ENCODE measurements at regions of chr6 and their contacts with region 1.

Region 1: DNA sequence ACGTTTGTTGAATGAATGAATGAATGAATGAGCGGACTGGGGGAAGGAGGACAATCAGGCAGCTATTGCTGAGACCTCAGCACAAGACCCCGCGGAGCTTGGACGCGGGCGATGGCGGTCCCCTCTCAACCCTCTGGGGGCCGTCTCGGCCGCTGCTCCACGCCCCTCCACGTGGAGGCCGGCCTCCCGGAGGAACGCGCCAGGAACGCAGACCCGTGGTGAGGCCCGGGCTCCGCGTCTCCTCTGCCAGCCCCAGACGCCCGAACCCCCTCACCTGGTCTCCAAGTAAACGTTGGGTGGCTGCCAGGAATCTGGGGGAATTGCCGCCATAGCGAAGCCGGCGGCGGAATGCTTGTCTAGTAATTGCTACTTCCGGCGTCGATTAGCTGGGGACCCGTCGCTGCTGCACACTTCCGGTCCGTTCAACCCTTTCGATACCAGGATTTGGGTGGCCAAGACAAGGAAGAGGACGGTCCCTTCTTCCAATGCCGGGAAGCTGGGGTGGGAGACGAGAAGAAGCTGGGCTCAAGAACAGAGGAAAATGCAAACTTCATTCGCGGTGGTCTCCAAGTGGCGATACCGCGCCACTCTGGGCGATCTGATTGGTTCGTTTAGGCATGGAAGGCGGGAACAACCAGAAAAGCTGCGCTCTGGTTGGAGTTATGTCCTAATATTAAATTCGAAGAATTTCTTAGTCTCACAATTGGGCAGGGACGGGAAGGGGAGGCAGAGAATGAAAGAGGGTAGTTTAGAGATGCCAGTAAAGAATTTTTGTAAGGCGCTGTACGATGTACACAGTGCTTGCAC is at the start of gene PPIL1:
- DNase-seq: peak; percentile 83
- H3K4me3 Mint-ChIP-seq: peak within 1 kb of the TSS; percentile 92
- H3K27ac Mint-ChIP-seq: peak within 1 kb of the TSS; percentile 95
- H3K4me1 Mint-ChIP-seq: peaks cover 57% of the 10 kb centered on the region
- H3K27me3 Mint-ChIP-seq: no peaks in the 10 kb centered on the region
- total RNA-seq, gene PPIL1: 22.8 to 24.3 TPM

Region 2: GRCh38 chr6:36615018-36615761 is 259.5 kb before region 1 on chr6:
- CTCF ChIA-PET with region 1: interaction called, 11 read pairs
- POLR2A ChIA-PET with region 1: no interaction called
- DNase-seq: peak; percentile 50
- H3K4me3 Mint-ChIP-seq: no peak overlapping the region
- H3K27ac Mint-ChIP-seq: peak overlapping the region; percentile 12
- H3K4me1 Mint-ChIP-seq: peaks cover 33% of the 10 kb centered on the region
- H3K27me3 Mint-ChIP-seq: no peaks in the 10 kb centered on the region

Region 3: GRCh38 chr6:36685936-36686667 is 188.5 kb before region 1 on chr6:
- CTCF ChIA-PET with region 1: no interaction called
- POLR2A ChIA-PET with region 1: no interaction called
- DNase-seq: no peak
- H3K4me3 Mint-ChIP-seq: no peak overlapping the region
- H3K27ac Mint-ChIP-seq: no peak overlapping the region
- H3K4me1 Mint-ChIP-seq: peaks cover 51% of the 10 kb centered on the region
- H3K27me3 Mint-ChIP-seq: no peaks in the 10 kb centered on the region

Region 4: DNA sequence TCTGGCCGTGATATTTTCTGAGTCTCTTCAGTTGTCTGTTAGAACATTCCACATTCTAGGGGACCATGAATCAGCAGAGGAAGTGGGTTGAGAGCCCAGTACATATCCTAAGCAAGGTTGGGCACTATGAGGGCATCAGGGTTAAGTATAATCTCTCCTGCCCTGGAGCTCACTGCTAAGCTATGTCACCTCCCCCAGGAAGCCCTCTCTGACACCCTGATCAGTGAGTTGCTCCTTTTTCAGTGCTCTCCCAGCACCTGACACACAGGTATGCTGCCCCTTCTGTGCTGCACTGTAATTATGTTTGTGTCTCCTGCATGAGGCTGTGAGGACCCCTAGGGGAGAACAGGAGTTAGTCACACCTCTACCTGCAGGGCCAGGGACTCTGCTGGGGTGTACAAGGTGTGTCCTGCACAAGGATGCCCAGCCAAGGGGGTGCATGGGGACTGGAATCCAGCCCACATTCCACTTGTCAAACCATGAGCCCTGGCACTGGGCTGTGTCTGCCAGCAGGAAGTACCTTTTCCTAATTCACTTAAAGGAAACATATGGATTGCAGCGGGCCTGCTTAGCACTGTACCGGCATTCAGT is 173.2 kb before region 1 on chr6:
- CTCF ChIA-PET with region 1: no interaction called
- POLR2A ChIA-PET with region 1: no interaction called
- DNase-seq: no peak
- H3K4me3 Mint-ChIP-seq: no peak overlapping the region
- H3K27ac Mint-ChIP-seq: no peak overlapping the region
- H3K4me1 Mint-ChIP-seq: peaks cover 33% of the 10 kb centered on the region
- H3K27me3 Mint-ChIP-seq: peaks cover 2% of the 10 kb centered on the region

Region 5: GRCh38 chr6:36780442-36781177 is 94.0 kb before region 1 on chr6:
- CTCF ChIA-PET with region 1: interaction called, 22 read pairs
- POLR2A ChIA-PET with region 1: no interaction called
- DNase-seq: no peak
- H3K4me3 Mint-ChIP-seq: no peak overlapping the region
- H3K27ac Mint-ChIP-seq: no peak overlapping the region
- H3K4me1 Mint-ChIP-seq: peaks cover 10% of the 10 kb centered on the region
- H3K27me3 Mint-ChIP-seq: peaks cover 20% of the 10 kb centered on the region

Region 6: GRCh38 chr6:36862164-36862847 is 12.3 kb before region 1 on chr6:
- CTCF ChIA-PET with region 1: interaction called, 7 read pairs
- POLR2A ChIA-PET with region 1: interaction called, 26 read pairs
- DNase-seq: peak; percentile 31
- H3K4me3 Mint-ChIP-seq: no peak overlapping the region
- H3K27ac Mint-ChIP-seq: peak overlapping the region; percentile 71
- H3K4me1 Mint-ChIP-seq: peaks cover 58% of the 10 kb centered on the region
- H3K27me3 Mint-ChIP-seq: no peaks in the 10 kb centered on the region

Region 7: DNA sequence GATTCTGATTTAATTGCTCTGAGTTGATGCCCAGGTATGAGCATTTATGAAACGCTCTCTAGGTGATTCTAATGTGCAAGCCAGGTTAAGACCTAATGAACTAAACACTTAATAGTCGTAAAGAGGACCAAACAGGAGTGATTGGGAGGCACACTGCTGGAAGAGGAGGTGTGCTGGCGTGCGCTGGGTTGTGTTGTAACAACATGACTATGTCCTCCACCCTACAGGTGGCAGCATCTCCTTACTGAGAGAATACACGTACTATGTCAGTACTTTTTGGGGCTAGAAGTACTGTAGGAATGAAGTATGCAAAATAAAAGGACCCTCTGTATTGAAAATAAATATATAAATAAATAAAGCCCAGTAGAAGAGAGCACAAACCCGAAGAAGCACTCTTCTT is 23.0 kb after region 1 on chr6:
- CTCF ChIA-PET with region 1: no interaction called
- POLR2A ChIA-PET with region 1: no interaction called
- DNase-seq: peak; percentile 31
- H3K4me3 Mint-ChIP-seq: no peak overlapping the region
- H3K27ac Mint-ChIP-seq: no peak overlapping the region
- H3K4me1 Mint-ChIP-seq: peaks cover 15% of the 10 kb centered on the region
- H3K27me3 Mint-ChIP-seq: no peaks in the 10 kb centered on the region

Region 8: DNA sequence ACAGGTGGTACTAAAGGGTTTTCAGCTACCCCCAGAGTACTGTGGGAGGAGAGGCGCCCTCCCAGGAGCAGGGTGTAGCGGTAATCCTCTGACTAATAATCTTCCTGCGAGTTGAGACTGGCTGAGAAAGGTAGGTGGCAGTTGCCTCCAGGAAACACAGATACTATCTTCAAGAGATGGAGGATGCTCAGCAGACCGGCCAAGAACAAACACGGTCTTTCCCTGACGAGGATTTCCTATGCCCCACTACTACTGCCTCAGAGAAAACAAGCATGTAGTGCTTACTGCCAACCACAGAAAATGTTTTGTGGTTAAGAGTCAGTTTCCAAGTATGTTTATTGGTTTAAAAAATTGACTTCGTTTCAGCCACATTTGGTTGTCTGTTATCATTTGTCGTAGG is 37.9 kb after region 1 on chr6:
- CTCF ChIA-PET with region 1: interaction called, 10 read pairs
- POLR2A ChIA-PET with region 1: interaction called, 10 read pairs
- DNase-seq: peak; percentile 80
- H3K4me3 Mint-ChIP-seq: peak overlapping the region; percentile 68
- H3K27ac Mint-ChIP-seq: peak overlapping the region; percentile 90
- H3K4me1 Mint-ChIP-seq: peaks cover 60% of the 10 kb centered on the region
- H3K27me3 Mint-ChIP-seq: no peaks in the 10 kb centered on the region

Region 9: GRCh38 chr6:37990762-37991525 is 1116.3 kb after region 1 on chr6:
- CTCF ChIA-PET with region 1: no interaction called
- POLR2A ChIA-PET with region 1: no interaction called
- DNase-seq: no peak
- H3K4me3 Mint-ChIP-seq: no peak overlapping the region
- H3K27ac Mint-ChIP-seq: no peak overlapping the region
- H3K4me1 Mint-ChIP-seq: peaks cover 8% of the 10 kb centered on the region
- H3K27me3 Mint-ChIP-seq: no peaks in the 10 kb centered on the region